ENCODE measurements at regions of chr17 and their contacts with region 1.

Region 1: DNA sequence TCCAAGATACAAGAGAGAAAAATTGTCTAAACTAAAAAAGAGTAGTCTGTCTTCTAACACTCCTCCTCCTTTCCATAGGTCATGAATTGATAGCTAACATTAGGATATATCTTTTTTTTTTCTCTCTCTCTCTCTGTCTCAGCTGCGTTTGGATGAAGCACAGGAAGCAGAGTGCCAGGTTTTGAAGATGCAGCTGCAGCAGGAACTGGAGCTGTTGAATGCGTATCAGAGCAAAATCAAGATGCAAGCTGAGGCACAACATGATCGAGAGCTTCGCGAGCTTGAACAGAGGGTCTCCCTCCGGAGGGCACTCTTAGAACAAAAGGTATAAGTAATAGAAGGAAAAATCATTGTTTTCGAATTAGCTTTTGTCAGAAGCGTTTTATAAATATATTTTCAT is 32.9 kb downstream of the ABHD15 start:
- DNase-seq: no peak
- ATAC-seq: no peak
- H3K4me3 ChIP-seq: no peak overlapping the region
- H3K27ac ChIP-seq: no peak overlapping the region
- H3K4me1 ChIP-seq: no peaks in the 10 kb centered on the region
- H3K27me3 ChIP-seq: no peaks in the 10 kb centered on the region

Region 2: GRCh38 chr17:29369831-29370735 is 163.9 kb before region 1 on chr17:
- intact Hi-C with region 1: loop called in 3 of 4 experiments (anchors 1 to 10 kb)
- DNase-seq: peak; percentile 50 to 71 (median 62)
- ATAC-seq: peak; percentile 93 to 94
- H3K4me3 ChIP-seq: peak overlapping the region; percentile 5
- H3K27ac ChIP-seq: peak overlapping the region; percentile 68
- H3K4me1 ChIP-seq: no peaks in the 10 kb centered on the region
- H3K27me3 ChIP-seq: no peaks in the 10 kb centered on the region

Region 3: GRCh38 chr17:29625037-29625750 is 91.2 kb after region 1 on chr17:
- intact Hi-C with region 1: no loop called
- DNase-seq: peak; percentile 60 to 80 (median 68)
- ATAC-seq: peak; percentile 45 to 54
- H3K4me3 ChIP-seq: no peak overlapping the region
- H3K27ac ChIP-seq: peak overlapping the region; percentile 28
- H3K4me1 ChIP-seq: peaks cover 13% of the 10 kb centered on the region
- H3K27me3 ChIP-seq: no peaks in the 10 kb centered on the region

Measured in right cardiac atrium (tissue), 5 donors.